Left ventricle myocardium superior (tissue), 1 donor: ENCODE measurements at regions of chr1 and their contacts with region 1.

Region 1: DNA sequence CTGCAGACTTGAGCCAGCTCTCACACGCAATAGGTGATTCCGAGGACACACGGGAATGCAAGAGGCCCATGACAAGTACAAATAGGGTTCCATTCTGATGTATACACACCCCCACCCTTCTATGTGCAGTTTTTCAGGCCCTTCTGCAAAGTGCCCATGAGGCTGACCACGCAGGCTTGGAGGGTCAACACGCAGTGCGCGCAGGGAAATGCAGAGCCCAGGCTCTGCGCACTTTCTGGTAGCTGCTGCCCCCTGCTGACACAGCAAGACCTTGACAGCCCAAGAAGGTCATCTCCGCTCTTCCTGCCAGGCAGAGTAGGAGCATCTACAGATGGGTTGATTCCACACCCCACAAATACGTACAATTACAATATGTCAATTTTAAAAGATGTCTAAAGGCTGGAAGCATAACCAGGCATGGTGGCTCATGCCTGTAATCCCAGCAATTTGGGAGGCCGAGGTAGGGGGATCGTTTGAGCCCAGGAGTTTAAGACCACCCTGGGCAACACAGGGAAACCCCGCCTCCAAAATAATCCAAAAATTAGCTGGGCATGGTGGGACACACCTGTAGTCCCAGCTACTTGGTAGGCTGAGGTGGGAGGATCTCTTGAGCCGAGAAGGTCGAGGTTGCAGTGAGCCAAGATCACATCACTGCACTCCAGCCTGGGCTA is 18.5 kb downstream of the SH3BP5L start:
- DNase-seq: peak; percentile 69
- ATAC-seq: peak; percentile 70

Region 2: GRCh38 chr1:248590055-248590454 is 217.1 kb before region 1 on chr1:
- intact Hi-C with region 1: no loop called
- DNase-seq: no peak
- ATAC-seq: no peak

Region 3: DNA sequence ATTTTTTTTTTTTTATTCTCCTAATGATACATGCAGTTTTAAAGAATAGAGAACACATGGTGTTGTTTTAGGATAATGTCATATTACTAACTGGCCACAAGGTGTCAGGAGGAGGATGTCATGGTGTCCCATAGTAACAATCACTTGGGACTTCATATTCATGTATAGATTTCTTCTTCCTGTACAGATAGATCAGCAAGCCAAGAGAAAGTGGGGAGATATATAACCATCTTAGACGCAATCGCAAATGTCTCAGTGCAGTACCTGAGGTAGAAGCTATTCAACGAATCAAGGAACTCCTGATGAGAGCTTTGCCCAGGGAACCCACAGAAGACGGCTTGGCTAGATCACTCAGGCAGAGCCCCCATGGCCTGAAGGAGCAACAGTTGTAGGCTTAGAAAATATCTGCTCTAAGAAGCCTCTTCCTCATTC is 184.6 kb before region 1 on chr1:
- intact Hi-C with region 1: loop called (anchors 5 kb)
- DNase-seq: no peak
- ATAC-seq: peak; percentile 45